Dendritic cell treated with granulocyte-macrophage colony-stimulating factor and Interleukin-4, amounts not matched to agents 40 ng/mL and 50 ng/mL, for 4 days (primary cell): ENCODE measurements at regions of chr5 and their contacts with region 1.

Region 1: DNA sequence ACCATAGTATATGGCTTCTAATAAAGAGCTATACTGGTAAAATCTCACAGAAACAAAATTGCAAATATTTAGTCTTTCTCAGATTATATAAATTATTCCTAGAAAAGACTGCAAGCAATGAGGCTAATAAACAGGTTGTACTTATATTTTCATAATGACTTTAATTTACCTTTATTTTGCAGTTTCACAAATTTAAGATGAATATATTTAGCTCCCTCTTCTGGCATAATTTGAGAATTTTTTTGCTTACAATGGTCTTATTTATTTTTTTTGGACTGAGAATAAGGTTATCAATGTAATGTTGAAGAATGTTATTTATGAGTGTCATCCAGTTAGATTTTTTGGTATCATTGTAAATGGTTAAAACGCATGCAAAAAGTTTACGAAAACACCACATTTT is 56.7 kb downstream of the PIK3R1 start:
- H3K4me3 Mint-ChIP-seq: no peak overlapping the region
- H3K27ac Mint-ChIP-seq: no peak overlapping the region
- H3K4me1 Mint-ChIP-seq: peaks cover 30% of the 10 kb centered on the region
- H3K27me3 Mint-ChIP-seq: no peaks in the 10 kb centered on the region

Region 2: DNA sequence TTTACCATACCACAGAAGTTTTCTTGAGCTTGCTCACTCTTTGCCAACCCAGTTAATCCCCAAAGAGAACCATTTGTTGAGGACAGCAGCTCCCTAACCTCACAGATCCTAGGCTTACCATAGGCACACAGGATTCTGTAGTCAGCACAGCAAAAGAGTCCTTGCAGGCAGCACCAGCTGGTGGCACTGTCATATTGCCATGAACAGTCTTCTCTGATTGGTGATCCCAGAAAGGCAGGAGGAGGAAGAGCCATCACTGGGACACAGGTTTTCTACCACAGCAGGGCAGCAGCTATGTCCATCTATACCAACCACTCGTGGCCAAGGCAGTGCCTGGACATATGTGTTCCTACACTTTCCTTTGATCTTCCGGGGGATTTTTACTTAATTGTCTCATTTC is 778.6 kb before region 1 on chr5:
- intact Hi-C with region 1: loop called (anchors 10 kb)
- H3K4me3 Mint-ChIP-seq: no peak overlapping the region
- H3K27ac Mint-ChIP-seq: no peak overlapping the region
- H3K4me1 Mint-ChIP-seq: no peaks in the 10 kb centered on the region
- H3K27me3 Mint-ChIP-seq: no peaks in the 10 kb centered on the region